Activated B cell treated with CpG ODN at 0.5 μM for 24 hours (primary cell): ENCODE measurements at regions of chr6 and their contacts with region 1.

Region 1: DNA sequence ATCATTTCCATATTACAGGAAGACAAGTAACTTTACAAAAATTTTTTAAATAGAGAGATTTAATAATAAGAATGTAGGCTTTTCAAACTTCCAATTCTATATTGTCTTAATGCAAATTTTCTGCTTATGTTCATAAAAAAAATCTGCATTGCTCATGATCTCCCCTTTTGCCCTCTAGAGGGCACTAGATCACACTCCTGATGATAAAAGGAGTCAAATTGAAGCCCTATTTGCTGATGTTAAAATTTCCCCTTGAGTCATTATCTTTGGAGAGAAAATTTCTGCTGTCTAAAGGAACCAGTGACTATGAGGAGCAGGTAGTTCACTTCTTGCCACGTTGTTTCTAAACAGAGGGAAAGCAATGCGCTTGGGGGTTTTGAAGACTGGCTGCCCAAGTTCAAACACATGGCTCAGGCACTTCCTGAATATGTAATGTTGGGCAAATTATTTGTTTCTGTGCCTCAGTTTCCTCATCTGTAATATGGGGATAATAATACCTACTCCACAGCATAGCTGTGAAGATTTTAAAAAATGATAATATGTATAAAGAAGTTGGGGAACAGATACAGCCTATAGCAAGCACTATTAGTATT is 874.2 kb downstream of the TFAP2A start:
- DNase-seq: no peak
- ATAC-seq: no peak
- H3K4me3 Mint-ChIP-seq: no peak overlapping the region
- H3K27ac Mint-ChIP-seq: no peak overlapping the region
- H3K4me1 Mint-ChIP-seq: no peaks in the 10 kb centered on the region
- H3K27me3 Mint-ChIP-seq: no peaks in the 10 kb centered on the region
- CTCF ChIP-seq: peak; percentile 31

Region 2: GRCh38 chr6:9754520-9754919 is 213.9 kb after region 1 on chr6:
- CTCF ChIA-PET with region 1: no interaction called
- POLR2A ChIA-PET with region 1: no interaction called
- intact Hi-C with region 1: no loop called
- DNase-seq: no peak
- ATAC-seq: no peak
- H3K4me3 Mint-ChIP-seq: no peak overlapping the region
- H3K27ac Mint-ChIP-seq: no peak overlapping the region
- H3K4me1 Mint-ChIP-seq: no peaks in the 10 kb centered on the region
- H3K27me3 Mint-ChIP-seq: no peaks in the 10 kb centered on the region
- CTCF ChIP-seq: no peak

Region 3: DNA sequence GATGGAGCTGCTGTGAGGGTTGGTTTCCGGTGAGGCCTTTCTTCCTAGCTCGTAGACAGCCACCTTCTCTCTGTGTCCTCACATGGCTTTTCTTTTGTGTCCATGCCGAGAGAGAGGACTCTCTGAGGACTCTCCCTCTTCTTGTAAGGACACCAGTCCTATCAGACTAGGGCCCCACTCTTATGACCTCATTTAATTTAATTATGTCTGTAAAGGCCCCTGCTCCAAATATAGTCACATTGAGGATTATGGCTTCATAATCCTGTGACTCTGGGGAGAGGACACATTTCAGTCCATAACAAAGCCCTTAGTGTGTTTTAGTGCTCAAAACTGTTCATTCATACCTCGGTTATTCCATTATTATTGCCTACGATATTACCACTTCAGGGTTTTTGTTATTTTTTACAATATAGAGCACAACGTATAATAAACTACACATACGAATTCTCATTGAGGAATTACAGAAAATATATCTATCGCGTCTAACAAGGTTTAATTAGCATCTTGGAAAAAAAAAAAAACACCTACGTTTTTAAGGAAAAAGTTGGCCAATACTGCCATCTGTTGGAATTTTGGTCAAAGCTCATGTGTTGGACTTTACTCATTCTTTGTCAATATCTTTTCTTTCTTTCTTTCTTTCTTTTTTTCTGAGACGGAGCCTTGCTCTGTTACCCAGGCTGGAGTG is 894.2 kb after region 1 on chr6:
- CTCF ChIA-PET with region 1: no interaction called
- POLR2A ChIA-PET with region 1: no interaction called
- intact Hi-C with region 1: loop called (anchors 2 kb)
- DNase-seq: no peak
- ATAC-seq: no peak
- H3K4me3 Mint-ChIP-seq: no peak overlapping the region
- H3K27ac Mint-ChIP-seq: no peak overlapping the region
- H3K4me1 Mint-ChIP-seq: peaks cover 6% of the 10 kb centered on the region
- H3K27me3 Mint-ChIP-seq: peaks cover 18% of the 10 kb centered on the region
- CTCF ChIP-seq: peak; percentile 31

Region 4: DNA sequence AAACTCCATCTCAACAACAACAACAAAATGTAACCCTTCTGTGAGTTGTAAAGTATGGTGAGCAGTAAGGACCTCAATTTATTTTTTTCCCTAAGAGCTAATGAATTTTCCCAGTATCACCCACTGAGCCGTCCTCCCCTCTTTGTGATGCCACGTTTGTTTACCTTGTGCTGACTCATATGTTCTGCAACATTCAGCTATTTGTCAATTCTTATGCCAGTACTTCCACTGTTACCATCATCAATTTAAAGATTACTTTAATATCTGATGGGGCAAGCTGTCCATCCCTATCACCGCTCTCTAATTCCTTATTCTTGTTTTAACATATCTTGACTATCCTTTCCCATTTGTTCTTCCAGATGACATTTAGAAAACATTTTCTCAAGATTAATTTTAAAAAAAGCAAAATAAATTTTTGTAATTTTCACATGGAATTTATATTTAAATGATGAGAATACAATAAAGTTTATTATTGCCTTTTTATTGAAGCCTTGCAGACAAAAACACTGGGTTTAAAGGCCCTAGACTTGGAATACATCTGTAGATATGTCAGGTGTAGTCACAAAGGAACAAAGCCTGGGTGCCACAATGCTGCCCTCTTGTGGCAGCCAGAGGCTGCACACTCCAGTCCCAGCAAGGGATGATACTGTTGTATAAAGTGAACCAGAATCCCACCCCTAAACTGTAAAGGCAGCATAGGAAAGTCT is 1260.4 kb after region 1 on chr6:
- CTCF ChIA-PET with region 1: no interaction called
- POLR2A ChIA-PET with region 1: no interaction called
- intact Hi-C with region 1: loop called (anchors 5 kb)
- DNase-seq: peak; percentile 37
- ATAC-seq: peak; percentile 75
- H3K4me3 Mint-ChIP-seq: no peak overlapping the region
- H3K27ac Mint-ChIP-seq: no peak overlapping the region
- H3K4me1 Mint-ChIP-seq: no peaks in the 10 kb centered on the region
- H3K27me3 Mint-ChIP-seq: no peaks in the 10 kb centered on the region
- CTCF ChIP-seq: peak; percentile 98